A549 (cell line): ENCODE measurements at regions of chr3 and their contacts with region 1.

Region 1: DNA sequence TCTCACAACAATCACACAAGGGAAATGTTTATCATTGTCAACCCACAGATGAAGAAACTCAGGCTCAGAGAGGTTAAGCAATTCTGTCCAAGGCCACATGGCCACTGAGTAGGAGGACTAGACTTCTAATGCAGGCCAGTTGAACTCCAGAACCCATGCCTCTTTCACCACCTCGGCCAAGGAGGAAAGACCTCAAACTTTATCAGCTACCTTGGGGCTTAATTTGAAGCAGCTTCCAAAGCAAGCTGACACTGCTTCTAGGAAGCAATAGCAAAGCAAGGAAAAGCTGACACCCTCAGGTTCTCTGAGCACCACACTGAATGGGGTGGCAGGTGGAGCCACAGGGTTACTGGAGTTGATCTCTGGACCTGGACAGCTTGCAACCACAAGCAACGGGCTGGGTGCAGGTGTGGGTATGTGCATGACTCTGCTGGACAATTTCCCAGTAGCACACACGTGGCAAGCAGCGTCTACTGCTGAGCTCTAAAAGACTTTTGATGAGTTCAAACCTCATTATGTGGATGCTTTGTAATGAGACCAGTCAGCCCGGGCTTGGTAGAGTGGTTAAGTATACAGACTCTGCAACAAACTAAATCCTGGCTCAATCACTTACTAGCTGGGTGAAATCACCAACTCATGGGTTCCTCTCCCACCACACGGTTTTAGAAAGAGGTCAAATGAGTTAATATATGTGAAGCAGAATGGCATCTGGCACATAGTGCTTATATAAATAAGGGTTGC is 23.1 kb downstream of the CCNL1 start:
- DNase-seq: no peak
- ATAC-seq: peak; percentile 5 to 31; a peak in 4 of 6 replicates
- H3K4me3 ChIP-seq: no peak overlapping the region
- H3K27ac ChIP-seq: peak overlapping the region; percentile 26 to 59; a peak in 4 of 6 replicates
- H3K4me1 ChIP-seq: peaks cover 33% of the 10 kb centered on the region
- CTCF ChIP-seq: no peak
- EP300 ChIP-seq: no peak
- POLR2A ChIP-seq: no peak
- RAD21 ChIP-seq: no peak

Region 2: DNA sequence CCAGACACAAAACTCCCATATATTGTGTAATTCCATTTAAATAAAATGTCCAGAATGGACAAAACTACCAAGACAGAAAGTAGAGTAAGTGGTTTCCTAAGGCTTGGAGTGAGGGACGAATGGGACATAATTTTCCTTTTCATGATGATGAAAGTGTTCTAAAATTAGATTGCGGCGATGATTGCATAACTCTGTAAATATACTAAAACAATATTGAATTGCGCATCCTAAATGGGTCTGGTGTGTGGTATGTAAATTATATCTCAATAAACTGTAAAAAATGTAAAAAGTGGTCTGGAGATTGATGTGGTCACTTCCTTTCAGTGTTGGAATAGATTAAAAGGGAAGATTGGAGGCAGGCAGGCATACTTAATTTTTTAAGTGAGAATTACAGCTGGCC is 1122.3 kb before region 1 on chr3:
- CTCF ChIA-PET with region 1: interaction called, 11 read pairs
- POLR2A ChIA-PET with region 1: no interaction called
- DNase-seq: no peak
- ATAC-seq: no peak
- H3K4me3 ChIP-seq: no peak overlapping the region
- H3K27ac ChIP-seq: no peak overlapping the region
- H3K4me1 ChIP-seq: no peaks in the 10 kb centered on the region
- CTCF ChIP-seq: no peak
- EP300 ChIP-seq: no peak
- POLR2A ChIP-seq: no peak
- RAD21 ChIP-seq: no peak

Region 3: DNA sequence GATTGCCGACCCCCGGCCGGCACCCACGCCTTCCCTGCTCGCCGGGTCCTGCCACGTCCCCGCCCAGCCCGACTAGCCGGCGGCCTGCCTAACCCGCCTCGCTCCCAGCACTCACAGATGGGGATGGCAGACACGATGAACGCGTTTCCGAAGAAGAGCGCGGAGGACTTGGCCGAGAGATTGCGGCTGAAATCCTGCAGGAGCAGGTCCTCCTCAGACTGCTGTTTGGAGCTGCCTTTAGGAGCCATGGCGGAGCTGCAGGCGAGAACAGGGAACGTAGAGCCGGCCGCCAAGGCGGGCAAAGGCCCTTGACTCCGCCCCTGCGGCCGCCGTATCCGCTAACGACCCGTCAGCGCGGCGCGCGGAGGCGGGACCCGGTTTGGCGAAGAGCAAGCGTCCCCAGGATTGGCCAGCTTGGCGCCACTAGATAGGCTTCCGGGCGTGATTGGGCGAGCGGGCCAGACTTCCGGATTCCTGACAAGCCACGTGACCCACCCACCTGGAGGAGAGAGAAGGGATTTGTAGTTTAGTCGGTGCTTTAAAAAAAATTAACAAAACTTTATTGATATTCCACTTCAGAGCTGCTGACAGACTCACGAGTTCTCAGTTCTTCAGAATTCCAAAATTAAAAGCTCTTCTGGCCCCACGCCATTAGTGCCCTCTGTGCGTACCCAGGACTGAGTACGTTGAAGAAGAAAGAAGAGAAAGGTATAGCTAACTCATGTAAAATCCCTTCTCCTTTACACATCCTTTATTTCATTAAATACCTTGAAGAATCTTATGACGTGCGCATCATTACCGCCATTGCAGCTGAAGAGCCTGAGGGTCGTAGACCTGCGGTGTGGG is 581.8 kb before region 1 on chr3 and contains the start of gene SSR3:
- CTCF ChIA-PET with region 1: interaction called, 10 read pairs
- POLR2A ChIA-PET with region 1: no interaction called
- DNase-seq: peak; percentile 92 to 99
- ATAC-seq: peak; percentile 99 to 100
- H3K4me3 ChIP-seq: peak within 1 kb of the TSS; percentile 61
- H3K27ac ChIP-seq: peak within 1 kb of the TSS; percentile 83 to 93
- H3K4me1 ChIP-seq: peaks cover 16% of the 10 kb centered on the region; the same call in 2 of the 3 replicates
- CTCF ChIP-seq: no peak
- EP300 ChIP-seq: no peak
- POLR2A ChIP-seq: peak; percentile 76
- RAD21 ChIP-seq: no peak
- polyA plus RNA-seq, gene SSR3: 187 and 242 TPM in 2 replicates

Region 4: GRCh38 chr3:157081681-157082210 is 55.1 kb before region 1 on chr3:
- CTCF ChIA-PET with region 1: interaction called, 72 read pairs
- POLR2A ChIA-PET with region 1: no interaction called
- DNase-seq: peak; percentile 85 to 91
- ATAC-seq: peak; percentile 98 to 99
- H3K4me3 ChIP-seq: no peak overlapping the region
- H3K27ac ChIP-seq: peak overlapping the region; percentile 49 to 72; a peak in 5 of 6 replicates
- H3K4me1 ChIP-seq: peaks cover 7% of the 10 kb centered on the region; the same call in 1 of the 3 replicates
- CTCF ChIP-seq: peak; percentile 90
- EP300 ChIP-seq: no peak
- POLR2A ChIP-seq: no peak
- RAD21 ChIP-seq: peak; percentile 98

Region 5: DNA sequence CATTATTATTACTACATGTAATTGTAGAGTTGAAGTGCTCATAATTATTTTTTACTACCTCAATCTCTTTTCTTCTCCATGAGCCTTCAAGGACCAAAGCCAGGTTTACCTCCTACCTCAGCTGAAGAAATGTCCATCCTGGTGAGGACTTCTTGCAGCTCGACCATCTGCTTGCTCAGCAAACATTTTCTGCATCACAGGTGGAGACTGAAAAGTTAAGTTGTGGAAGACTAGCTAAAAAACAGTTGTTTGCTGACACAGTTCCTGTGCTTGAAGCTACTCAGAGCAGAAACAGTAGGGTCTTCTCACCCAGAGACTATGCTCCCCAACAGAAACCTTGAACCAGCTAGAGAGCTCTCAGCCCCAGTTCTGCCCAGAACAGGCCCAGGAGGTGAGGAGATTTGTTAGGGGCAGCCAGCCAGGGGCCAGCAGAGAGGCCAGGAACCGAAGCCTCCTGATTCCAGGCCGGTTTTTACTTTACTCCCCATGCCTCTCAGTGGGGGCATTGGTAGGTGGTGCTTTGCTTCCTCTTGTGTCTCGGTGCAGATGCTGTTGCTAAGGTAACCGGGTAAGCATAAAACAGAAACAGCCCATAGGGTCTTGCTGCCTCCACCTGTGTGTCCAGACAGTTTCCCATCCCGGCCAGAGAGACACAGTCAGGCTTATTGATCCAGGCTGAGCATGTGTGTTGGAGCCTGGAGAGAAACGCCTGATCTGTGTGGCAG is 31.7 kb before region 1 on chr3:
- CTCF ChIA-PET with region 1: interaction called, 29 read pairs
- POLR2A ChIA-PET with region 1: no interaction called
- DNase-seq: no peak
- ATAC-seq: peak in 1 of 2 experiments; percentile 35; a peak in 3 of 6 replicates
- H3K4me3 ChIP-seq: no peak overlapping the region
- H3K27ac ChIP-seq: peak overlapping the region in 1 of 2 experiments; percentile 43; a peak in 1 of 6 replicates
- H3K4me1 ChIP-seq: peaks cover 9% of the 10 kb centered on the region; the same call in 1 of the 3 replicates
- CTCF ChIP-seq: no peak
- EP300 ChIP-seq: no peak
- POLR2A ChIP-seq: no peak
- RAD21 ChIP-seq: no peak

Region 6: DNA sequence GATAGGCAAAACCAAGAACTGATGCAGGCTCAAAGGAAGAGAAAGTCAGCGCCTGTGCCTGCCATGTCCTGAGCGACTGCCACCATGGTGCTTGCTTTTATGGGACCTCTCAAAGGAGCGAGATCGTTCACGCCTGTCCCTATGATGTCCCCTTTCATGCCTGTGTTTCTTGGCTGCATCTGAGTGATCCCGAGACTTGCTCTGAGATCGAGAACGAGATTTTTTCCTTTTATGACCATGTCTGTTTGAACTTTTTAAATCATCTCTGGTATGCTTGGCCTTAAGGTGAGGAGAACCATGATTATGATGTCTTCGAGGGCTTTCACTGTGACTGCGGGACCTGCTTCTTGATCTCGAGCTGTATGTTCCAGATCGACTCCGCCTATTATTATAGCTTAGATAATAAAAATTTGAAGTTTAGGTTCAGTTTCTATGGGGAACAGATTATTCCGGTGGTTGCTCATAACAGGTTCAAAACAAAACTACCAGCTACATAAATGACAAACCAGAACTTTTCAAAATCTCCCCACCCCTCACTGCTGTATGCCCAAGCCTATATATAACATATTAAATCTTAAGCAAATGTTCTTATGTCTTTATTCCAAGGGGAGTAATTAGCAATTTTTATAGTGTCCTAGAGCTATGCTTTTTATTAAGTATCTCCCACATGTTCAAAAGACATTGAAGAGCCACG is 11.5 kb after region 1 on chr3:
- CTCF ChIA-PET with region 1: interaction called, 26 read pairs
- POLR2A ChIA-PET with region 1: interaction called, 5 read pairs
- DNase-seq: no peak
- ATAC-seq: no peak; a peak in 1 of 6 replicates
- H3K4me3 ChIP-seq: no peak overlapping the region
- H3K27ac ChIP-seq: no peak overlapping the region
- H3K4me1 ChIP-seq: no peaks in the 10 kb centered on the region; the same call in 2 of the 3 replicates
- CTCF ChIP-seq: no peak
- EP300 ChIP-seq: no peak
- POLR2A ChIP-seq: no peak
- RAD21 ChIP-seq: no peak

Region 7: DNA sequence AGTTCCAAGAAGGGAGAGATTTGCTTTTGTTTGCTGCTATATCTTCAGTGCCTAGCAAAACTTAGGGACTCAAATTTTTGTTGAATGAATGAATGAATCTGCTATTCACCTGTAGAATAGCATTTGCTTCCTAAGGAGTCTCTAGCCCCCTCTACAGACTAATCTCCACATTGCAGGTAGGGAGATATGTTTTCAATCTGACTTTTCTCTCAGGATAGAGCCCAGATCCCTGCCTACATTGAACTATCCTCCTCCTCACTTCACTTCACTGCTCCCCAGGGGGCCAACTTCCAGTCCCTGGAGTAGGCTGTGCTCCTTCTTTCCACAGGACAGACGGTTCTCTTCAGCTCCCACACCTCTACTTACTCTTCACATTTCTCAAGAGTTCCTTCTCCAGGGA is 217.9 kb after region 1 on chr3:
- CTCF ChIA-PET with region 1: no interaction called
- POLR2A ChIA-PET with region 1: no interaction called
- DNase-seq: peak in 1 of 2 experiments; percentile 24
- ATAC-seq: peak in 1 of 2 experiments; percentile 50; a peak in 3 of 6 replicates
- H3K4me3 ChIP-seq: no peak overlapping the region
- H3K27ac ChIP-seq: peak overlapping the region in 1 of 2 experiments; percentile 54; a peak in 1 of 6 replicates
- H3K4me1 ChIP-seq: peaks cover 13% of the 10 kb centered on the region
- CTCF ChIP-seq: peak; percentile 31; the same call in 2 of the 3 replicates
- EP300 ChIP-seq: no peak
- POLR2A ChIP-seq: no peak
- RAD21 ChIP-seq: peak in 1 of 2 experiments; percentile 36; a peak in 2 of 5 replicates